ENCODE measurements at regions of chr2 and their contacts with region 1.

Region 1: GRCh38 chr2:57497489-57498096 is 549.0 kb upstream of the VRK2 start:
- DNase-seq: peak; percentile 41
- ATAC-seq: peak; percentile 72
- H3K4me3 ChIP-seq: no peak overlapping the region
- H3K27ac ChIP-seq: no peak overlapping the region
- H3K4me1 ChIP-seq: no peaks in the 10 kb centered on the region
- H3K27me3 ChIP-seq: no peaks in the 10 kb centered on the region
- CTCF ChIP-seq: peak; percentile 73 to 88 (median 77)
- POLR2A ChIP-seq: no peak
- RAD21 ChIP-seq: peak; percentile 87

Region 2: GRCh38 chr2:57044931-57045635 is 452.5 kb before region 1 on chr2:
- CTCF ChIA-PET with region 1: no interaction called
- POLR2A ChIA-PET with region 1: no interaction called
- RAD21 ChIA-PET with region 1: no interaction called
- intact Hi-C with region 1: loop called (anchors 10 kb)
- DNase-seq: no peak
- ATAC-seq: no peak
- H3K4me3 ChIP-seq: no peak overlapping the region
- H3K27ac ChIP-seq: no peak overlapping the region
- H3K4me1 ChIP-seq: no peaks in the 10 kb centered on the region
- H3K27me3 ChIP-seq: no peaks in the 10 kb centered on the region
- CTCF ChIP-seq: no peak
- POLR2A ChIP-seq: no peak
- RAD21 ChIP-seq: no peak

Region 3: DNA sequence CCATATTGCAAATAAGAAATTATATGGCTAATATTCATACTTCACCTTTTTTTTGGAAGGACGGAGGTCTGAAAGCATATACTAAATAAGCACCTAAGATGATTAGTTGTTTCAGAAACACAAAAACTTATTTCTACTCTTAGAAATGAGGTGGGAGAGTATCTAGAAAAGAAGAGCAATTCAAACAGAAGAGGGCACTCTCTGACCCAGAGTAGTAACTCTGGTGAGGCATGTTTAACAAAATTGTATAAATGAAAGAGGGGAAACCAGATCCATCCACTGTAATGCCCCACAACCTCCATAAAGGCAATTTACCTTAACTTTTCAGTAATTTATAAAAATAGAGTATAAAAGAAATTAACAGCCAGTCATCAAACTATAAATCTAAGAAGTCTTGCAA is 120.6 kb before region 1 on chr2:
- CTCF ChIA-PET with region 1: interaction called, 15 read pairs
- POLR2A ChIA-PET with region 1: no interaction called
- RAD21 ChIA-PET with region 1: no interaction called
- intact Hi-C with region 1: loop called (anchors 1 kb)
- DNase-seq: no peak
- ATAC-seq: peak; percentile 64
- H3K4me3 ChIP-seq: no peak overlapping the region
- H3K27ac ChIP-seq: no peak overlapping the region
- H3K4me1 ChIP-seq: peaks cover 10 to 34% of the 10 kb centered on the region in 2 experiments
- H3K27me3 ChIP-seq: no peaks in the 10 kb centered on the region
- CTCF ChIP-seq: peak; percentile 31 to 58 (median 53); a peak in 4 of 6 replicates
- POLR2A ChIP-seq: no peak
- RAD21 ChIP-seq: peak; percentile 74

Region 4: GRCh38 chr2:57396355-57397098 is 101.1 kb before region 1 on chr2:
- CTCF ChIA-PET with region 1: no interaction called
- POLR2A ChIA-PET with region 1: no interaction called
- RAD21 ChIA-PET with region 1: no interaction called
- intact Hi-C with region 1: no loop called
- DNase-seq: no peak
- ATAC-seq: no peak
- H3K4me3 ChIP-seq: no peak overlapping the region
- H3K27ac ChIP-seq: no peak overlapping the region
- H3K4me1 ChIP-seq: no peaks in the 10 kb centered on the region
- H3K27me3 ChIP-seq: no peaks in the 10 kb centered on the region
- CTCF ChIP-seq: no peak
- POLR2A ChIP-seq: no peak
- RAD21 ChIP-seq: no peak

Measured in HCT116 (cell line).